ENCODE measurements at regions of chr20 and their contacts with region 1.

Region 1: DNA sequence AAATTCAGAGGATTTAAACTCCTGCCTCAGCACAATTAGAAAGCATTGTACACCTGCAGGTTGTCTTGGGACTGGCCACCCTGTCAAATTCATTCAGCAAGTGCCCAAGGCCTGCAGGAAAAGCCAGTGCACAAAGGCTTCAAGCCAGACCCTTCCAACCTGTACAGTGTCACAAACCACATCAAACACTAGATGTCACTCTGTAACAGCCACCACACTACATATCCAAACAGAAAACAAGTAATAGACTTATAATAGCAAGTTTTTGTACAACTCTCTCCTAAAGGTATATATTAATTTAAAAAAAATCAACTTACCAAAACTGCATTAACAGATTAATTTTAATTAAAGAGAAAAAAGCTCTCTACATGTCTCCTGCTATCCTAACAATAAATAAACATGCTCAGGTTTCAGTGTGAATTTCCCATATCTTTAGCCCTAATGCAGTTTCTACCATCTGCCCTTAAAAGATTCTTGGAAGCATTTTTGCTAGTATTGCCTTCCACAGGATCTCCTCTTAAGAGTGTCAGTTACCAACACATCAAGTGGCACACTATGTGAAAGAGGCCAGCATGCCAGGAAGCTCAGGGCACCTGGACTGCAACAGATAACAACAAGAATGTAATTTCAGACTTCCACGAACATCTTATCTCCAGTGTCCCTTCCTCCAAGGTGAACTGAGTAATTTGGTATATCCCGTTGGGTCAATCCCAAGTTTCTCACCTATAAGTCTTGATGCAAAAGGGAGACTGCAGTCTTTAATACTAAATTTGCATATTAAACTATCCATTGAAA is 47.5 kb downstream of the RALGAPA2 start:
- DNase-seq: no peak
- ATAC-seq: peak; percentile 83
- H3K4me3 ChIP-seq: no peak overlapping the region
- H3K27ac ChIP-seq: no peak overlapping the region
- H3K4me1 ChIP-seq: peaks cover 41% of the 10 kb centered on the region
- H3K27me3 ChIP-seq: no peaks in the 10 kb centered on the region
- CTCF ChIP-seq: peak; percentile 52

Region 2: DNA sequence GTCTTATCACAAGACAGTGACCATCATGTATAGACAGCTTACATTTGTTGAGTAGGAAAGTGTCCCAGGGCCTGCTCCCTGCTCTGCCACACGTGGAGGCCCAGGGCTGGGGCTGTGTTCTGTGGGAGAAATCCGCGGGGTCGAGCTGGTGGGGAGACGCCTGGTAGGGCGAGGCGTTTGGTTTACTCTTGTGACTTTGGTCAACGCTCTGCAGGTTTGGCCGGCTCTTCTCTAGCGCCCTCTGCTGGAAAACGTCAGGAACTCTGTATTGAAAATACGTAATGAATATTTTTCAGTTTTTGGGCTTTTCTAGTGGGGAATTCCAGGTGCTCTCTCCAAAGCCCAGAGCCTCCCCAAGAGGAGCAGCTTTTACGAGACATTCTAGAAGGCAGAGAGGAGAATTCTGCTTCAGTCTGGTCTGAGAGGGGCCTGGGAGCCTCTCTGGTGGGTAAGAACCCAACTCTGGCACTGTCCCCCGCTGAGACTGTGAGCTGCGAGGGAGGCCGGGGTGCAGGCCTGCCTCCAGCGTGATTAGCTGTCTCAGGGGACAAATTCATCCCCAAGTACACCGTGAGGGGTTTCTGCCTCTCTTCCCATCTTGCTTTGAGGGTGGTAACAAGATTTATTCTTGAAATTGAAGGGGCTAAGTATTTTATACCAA is 160.1 kb after region 1 on chr20:
- intact Hi-C with region 1: loop called (anchors 5 kb)
- DNase-seq: peak; percentile 78
- ATAC-seq: peak; percentile 84
- H3K4me3 ChIP-seq: no peak overlapping the region
- H3K27ac ChIP-seq: no peak overlapping the region
- H3K4me1 ChIP-seq: peaks cover 5% of the 10 kb centered on the region
- H3K27me3 ChIP-seq: no peaks in the 10 kb centered on the region
- CTCF ChIP-seq: peak; percentile 83